Adrenal gland (tissue), 19 donors: ENCODE measurements at regions of chr1 and their contacts with region 1.

Region 1: GRCh38 chr1:27979151-27979858 is 19.5 kb downstream of the XKR8 start:
- DNase-seq: no peak
- H3K4me3 ChIP-seq: no peak overlapping the region
- H3K27ac ChIP-seq: no peak overlapping the region
- H3K4me1 ChIP-seq: no peaks in the 10 kb centered on the region
- H3K27me3 ChIP-seq: no peaks in the 10 kb centered on the region
- CTCF ChIP-seq: peak; percentile 23 to 76 (median 60)
- POLR2A ChIP-seq: no peak

Region 2: GRCh38 chr1:27830621-27831424 is 148.5 kb before region 1 on chr1 and contains the start of gene PPP1R8:
- intact Hi-C with region 1: no loop called
- DNase-seq: peak; percentile 92 to 96 (median 94)
- H3K4me3 ChIP-seq: peak within 1 kb of the TSS; percentile 64 to 96 (median 82)
- H3K27ac ChIP-seq: peak within 1 kb of the TSS; percentile 77 to 93 (median 84)
- H3K4me1 ChIP-seq: peaks cover 4 to 15% of the 10 kb centered on the region in 2 donors
- H3K27me3 ChIP-seq: no peaks in the 10 kb centered on the region
- CTCF ChIP-seq: no peak
- POLR2A ChIP-seq: peak; percentile 27 to 81
- total RNA-seq, gene PPP1R8: 20.7 to 63.5 (median 30.9) TPM

Region 3: GRCh38 chr1:27858072-27858958 is 121.0 kb before region 1 on chr1:
- intact Hi-C with region 1: loop called (anchors 2 to 5 kb)
- DNase-seq: peak; percentile 82 to 97 (median 89)
- H3K4me3 ChIP-seq: no peak overlapping the region
- H3K27ac ChIP-seq: peak overlapping the region in 2 of 5 donors; percentile 40 to 57
- H3K4me1 ChIP-seq: peaks cover 7 to 10% of the 10 kb centered on the region in 2 donors
- H3K27me3 ChIP-seq: no peaks in the 10 kb centered on the region
- CTCF ChIP-seq: peak; percentile 94 to 98 (median 95)
- POLR2A ChIP-seq: no peak

Region 4: GRCh38 chr1:28104866-28105467 is 125.7 kb after region 1 on chr1:
- intact Hi-C with region 1: no loop called
- DNase-seq: peak; percentile 22 to 78 (median 34)
- H3K4me3 ChIP-seq: peak overlapping the region in 1 of 4 donors; percentile 51
- H3K27ac ChIP-seq: no peak overlapping the region
- H3K4me1 ChIP-seq: no peaks in the 10 kb centered on the region
- H3K27me3 ChIP-seq: no peaks in the 10 kb centered on the region
- CTCF ChIP-seq: no peak
- POLR2A ChIP-seq: no peak

Region 5: GRCh38 chr1:28115267-28115666 is 136.0 kb after region 1 on chr1:
- intact Hi-C with region 1: no loop called
- DNase-seq: peak in 4 of 7 donors; percentile 32 to 61 (median 42)
- H3K4me3 ChIP-seq: no peak overlapping the region
- H3K27ac ChIP-seq: no peak overlapping the region
- H3K4me1 ChIP-seq: no peaks in the 10 kb centered on the region
- H3K27me3 ChIP-seq: no peaks in the 10 kb centered on the region
- CTCF ChIP-seq: no peak
- POLR2A ChIP-seq: no peak

Region 6: GRCh38 chr1:28199328-28200233 is 220.3 kb after region 1 on chr1:
- intact Hi-C with region 1: no loop called
- DNase-seq: peak in 1 of 7 donors; percentile 40
- H3K4me3 ChIP-seq: no peak overlapping the region
- H3K27ac ChIP-seq: no peak overlapping the region
- H3K4me1 ChIP-seq: no peaks in the 10 kb centered on the region
- H3K27me3 ChIP-seq: no peaks in the 10 kb centered on the region
- CTCF ChIP-seq: no peak
- POLR2A ChIP-seq: no peak